ENCODE measurements at regions of chr6 and their contacts with region 1.

Region 1: DNA sequence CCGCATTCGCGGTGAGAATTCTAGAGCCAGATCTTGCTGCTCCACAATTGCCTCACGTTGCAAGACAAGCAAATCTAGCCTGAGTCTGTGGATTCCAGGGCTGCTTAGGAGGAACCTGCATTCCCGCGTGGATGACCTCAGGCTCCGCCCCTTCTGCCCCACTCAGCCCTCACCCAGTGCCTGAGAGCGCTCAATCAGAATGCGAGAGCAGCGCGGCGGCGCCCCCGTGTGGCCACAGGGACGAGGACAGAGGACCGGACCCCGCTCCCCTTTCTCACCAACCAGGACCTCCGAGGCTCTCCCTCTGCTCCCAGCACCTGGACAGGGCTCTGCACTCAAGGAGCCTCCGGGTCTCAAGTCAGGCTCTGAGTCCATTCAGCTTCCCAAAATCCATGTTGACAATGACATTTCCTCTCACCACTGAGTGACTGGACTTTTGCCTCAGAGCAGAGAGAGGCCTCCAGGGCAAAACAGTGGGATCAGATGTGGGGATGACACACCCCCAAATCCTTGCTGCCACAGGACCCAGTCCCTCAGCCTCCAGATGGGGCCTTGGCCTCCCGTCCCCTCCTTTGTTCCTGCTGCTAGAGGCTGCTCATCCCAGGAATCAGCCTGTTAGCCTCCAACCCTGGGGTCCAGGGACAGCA is 52.0 kb downstream of the RPP21 start:
- DNase-seq: peak; percentile 51 to 89 (median 79)
- ATAC-seq: peak; percentile 96 to 100 (median 98)
- H3K4me3 ChIP-seq: no peak overlapping the region
- H3K4me3 Mint-ChIP-seq: no peak overlapping the region
- H3K27ac ChIP-seq: no peak overlapping the region
- H3K27ac Mint-ChIP-seq: no peak overlapping the region
- H3K4me1 ChIP-seq: peaks cover 0 to 8% of the 10 kb centered on the region in 2 experiments
- H3K4me1 Mint-ChIP-seq: peaks cover 0 to 5% (median 3%) of the 10 kb centered on the region in 3 donors
- H3K27me3 ChIP-seq: peaks cover 7 to 40% of the 10 kb centered on the region in 2 experiments
- H3K27me3 Mint-ChIP-seq: peaks cover 34 to 43% of the 10 kb centered on the region in 2 donors

Region 2: GRCh38 chr6:30212865-30213666 is 183.9 kb before region 1 on chr6 and contains the start of gene TRIM26:
- CTCF ChIA-PET with region 1: interaction called in 1 of 2 experiments, 4 read pairs
- POLR2A ChIA-PET with region 1: interaction called in 1 of 2 experiments, 10 read pairs
- DNase-seq: peak; percentile 92 to 98 (median 96)
- ATAC-seq: peak; percentile 90 to 93 (median 90)
- H3K4me3 ChIP-seq: peak within 1 kb of the TSS; percentile 63 to 70
- H3K4me3 Mint-ChIP-seq: peak within 1 kb of the TSS; percentile 88 to 99 (median 96)
- H3K27ac ChIP-seq: peak within 1 kb of the TSS; percentile 99
- H3K27ac Mint-ChIP-seq: peak within 1 kb of the TSS; percentile 96 to 99
- H3K4me1 ChIP-seq: peaks cover 22 to 27% of the 10 kb centered on the region in 2 experiments
- H3K4me1 Mint-ChIP-seq: peaks cover 52 to 63% (median 54%) of the 10 kb centered on the region in 3 donors
- H3K27me3 ChIP-seq: no peaks in the 10 kb centered on the region
- H3K27me3 Mint-ChIP-seq: no peaks in the 10 kb centered on the region
- total RNA-seq, gene TRIM26: 46.4 to 57.4 (median 54.1) TPM

Region 3: DNA sequence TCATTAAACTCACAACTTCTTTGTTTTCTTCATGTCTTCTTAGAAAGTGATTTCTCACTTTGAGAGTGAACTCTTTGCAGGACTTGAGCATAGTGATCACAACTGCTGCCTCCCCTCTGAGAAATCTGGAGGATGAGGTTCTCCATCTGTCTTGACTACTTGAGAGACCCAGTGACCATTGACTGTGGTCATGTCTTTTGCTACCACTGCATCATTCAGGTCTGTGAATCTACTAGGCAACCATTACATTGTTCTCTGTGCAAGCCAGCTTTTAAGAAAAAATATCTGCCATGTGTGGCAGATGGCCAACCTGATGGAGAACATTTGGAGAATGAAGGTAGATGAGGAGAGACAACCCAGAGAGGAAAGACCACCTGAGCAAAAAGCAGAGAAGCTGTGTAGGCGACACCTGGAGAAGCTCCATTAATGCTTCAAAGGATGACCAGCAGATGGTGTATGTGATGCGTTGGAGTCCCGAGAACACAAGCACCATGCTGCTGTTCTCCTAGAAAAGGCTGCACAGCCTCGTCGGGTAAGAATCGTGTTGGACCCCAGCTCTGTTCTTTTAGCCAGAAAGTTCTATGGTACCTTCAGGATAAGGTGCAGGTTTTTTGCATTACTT is 158.7 kb before region 1 on chr6:
- CTCF ChIA-PET with region 1: interaction called in 1 of 2 experiments, 10 read pairs
- POLR2A ChIA-PET with region 1: no interaction called
- DNase-seq: peak in 11 of 35 experiments; percentile 9 to 63 (median 16)
- ATAC-seq: peak; percentile 38 to 71 (median 52)
- H3K4me3 ChIP-seq: no peak overlapping the region
- H3K4me3 Mint-ChIP-seq: no peak overlapping the region
- H3K27ac ChIP-seq: no peak overlapping the region
- H3K27ac Mint-ChIP-seq: no peak overlapping the region
- H3K4me1 ChIP-seq: no peaks in the 10 kb centered on the region
- H3K4me1 Mint-ChIP-seq: no peaks in the 10 kb centered on the region
- H3K27me3 ChIP-seq: peaks cover 0 to 9% of the 10 kb centered on the region in 2 experiments
- H3K27me3 Mint-ChIP-seq: peaks cover 21 to 36% of the 10 kb centered on the region in 2 donors

Region 4: DNA sequence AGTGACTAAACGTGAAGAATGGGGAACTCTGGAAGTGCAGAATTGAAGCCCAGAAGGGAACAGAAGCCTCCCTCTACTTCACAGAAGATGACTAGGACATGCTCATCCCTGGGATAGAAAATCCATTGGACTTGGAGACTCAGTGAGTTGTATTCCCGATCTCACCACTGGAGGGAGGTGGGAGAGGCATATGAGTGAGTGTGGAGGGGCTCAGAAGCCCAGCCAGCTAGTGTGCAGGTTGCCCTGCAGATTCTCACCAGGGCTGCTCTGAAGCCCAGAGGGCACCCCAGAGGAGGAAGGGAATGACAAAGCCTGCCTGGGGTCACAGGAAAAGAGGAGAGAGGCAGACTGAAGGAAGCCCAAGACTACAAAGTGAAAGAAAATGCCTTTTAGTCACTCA is 50.3 kb after region 1 on chr6:
- CTCF ChIA-PET with region 1: no interaction called
- POLR2A ChIA-PET with region 1: no interaction called
- DNase-seq: no peak
- ATAC-seq: no peak
- H3K4me3 ChIP-seq: no peak overlapping the region
- H3K4me3 Mint-ChIP-seq: no peak overlapping the region
- H3K27ac ChIP-seq: no peak overlapping the region
- H3K27ac Mint-ChIP-seq: no peak overlapping the region
- H3K4me1 ChIP-seq: peaks cover 22 to 36% of the 10 kb centered on the region in 2 experiments
- H3K4me1 Mint-ChIP-seq: peaks cover 33 to 43% (median 40%) of the 10 kb centered on the region in 3 donors
- H3K27me3 ChIP-seq: peaks cover 20 to 69% of the 10 kb centered on the region in 2 experiments
- H3K27me3 Mint-ChIP-seq: peaks cover 78 to 85% of the 10 kb centered on the region in 2 donors